ENCODE measurements at regions of chr10 and their contacts with region 1.

Region 1: DNA sequence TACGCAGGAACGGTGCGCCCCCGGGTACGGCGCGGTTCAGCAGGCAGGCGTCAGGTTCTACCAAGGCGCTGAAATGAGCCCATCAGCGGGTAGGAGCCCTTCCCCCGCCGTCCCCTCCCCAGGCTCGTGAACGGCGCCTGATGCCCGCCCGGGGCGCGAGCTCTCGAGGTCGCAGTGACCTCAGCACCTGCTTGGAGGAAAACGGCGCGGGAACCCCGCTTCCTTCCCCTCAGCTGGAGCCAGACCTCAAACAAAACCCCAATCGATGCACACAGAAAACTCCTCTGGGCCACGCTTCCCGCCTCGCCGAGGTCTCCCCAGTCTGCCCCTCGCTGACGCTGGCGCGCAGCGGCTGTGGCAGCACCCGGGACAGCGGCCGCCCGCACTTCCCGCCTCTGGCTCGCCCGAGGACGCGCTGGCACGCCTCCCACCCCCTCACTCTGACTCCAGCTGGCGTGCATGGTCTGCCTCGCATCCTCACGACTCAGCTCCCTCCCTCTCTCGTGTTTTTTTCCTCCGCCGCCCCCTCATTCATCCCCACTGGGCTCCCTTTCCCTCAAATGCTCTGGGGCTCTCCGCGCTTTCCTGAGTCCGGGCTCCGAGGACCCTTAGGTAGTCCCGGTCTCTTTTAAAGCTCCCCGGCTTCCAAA is 514 bp upstream of the GAD2 start:
- DNase-seq: peak; percentile 71
- H3K4me3 Mint-ChIP-seq: peak overlapping the region; percentile 40
- H3K27ac Mint-ChIP-seq: no peak overlapping the region
- H3K4me1 Mint-ChIP-seq: peaks cover 40% of the 10 kb centered on the region
- H3K27me3 Mint-ChIP-seq: peaks cover 85% of the 10 kb centered on the region

Region 2: GRCh38 chr10:25875556-25876165 is 340.4 kb before region 1 on chr10:
- CTCF ChIA-PET with region 1: no interaction called
- intact Hi-C with region 1: loop called (anchors 2 kb)
- DNase-seq: peak; percentile 85
- H3K4me3 Mint-ChIP-seq: no peak overlapping the region
- H3K27ac Mint-ChIP-seq: no peak overlapping the region
- H3K4me1 Mint-ChIP-seq: no peaks in the 10 kb centered on the region
- H3K27me3 Mint-ChIP-seq: peaks cover 4% of the 10 kb centered on the region

Region 3: DNA sequence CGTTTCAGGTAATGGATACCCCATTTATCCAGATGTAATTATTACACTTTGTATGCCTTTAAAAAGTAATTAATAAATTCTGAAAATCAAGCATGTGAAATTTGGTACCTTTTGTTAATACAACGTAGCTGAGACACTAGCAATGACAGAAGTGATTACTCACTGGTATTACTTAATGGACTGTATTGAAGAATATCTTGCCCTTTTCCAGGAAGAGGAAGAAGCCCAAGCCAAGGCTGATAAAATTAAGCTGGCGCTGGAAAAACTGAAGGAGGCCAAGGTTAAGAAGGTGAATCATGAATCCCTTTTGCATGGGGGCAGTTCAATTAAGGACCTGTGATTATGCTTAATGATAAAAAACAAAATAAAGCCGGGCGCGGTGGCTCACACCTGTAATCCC is 286.9 kb after region 1 on chr10:
- CTCF ChIA-PET with region 1: no interaction called
- intact Hi-C with region 1: no loop called
- DNase-seq: no peak
- H3K4me3 Mint-ChIP-seq: no peak overlapping the region
- H3K27ac Mint-ChIP-seq: peak overlapping the region; percentile 9
- H3K4me1 Mint-ChIP-seq: peaks cover 12% of the 10 kb centered on the region
- H3K27me3 Mint-ChIP-seq: no peaks in the 10 kb centered on the region

Region 4: DNA sequence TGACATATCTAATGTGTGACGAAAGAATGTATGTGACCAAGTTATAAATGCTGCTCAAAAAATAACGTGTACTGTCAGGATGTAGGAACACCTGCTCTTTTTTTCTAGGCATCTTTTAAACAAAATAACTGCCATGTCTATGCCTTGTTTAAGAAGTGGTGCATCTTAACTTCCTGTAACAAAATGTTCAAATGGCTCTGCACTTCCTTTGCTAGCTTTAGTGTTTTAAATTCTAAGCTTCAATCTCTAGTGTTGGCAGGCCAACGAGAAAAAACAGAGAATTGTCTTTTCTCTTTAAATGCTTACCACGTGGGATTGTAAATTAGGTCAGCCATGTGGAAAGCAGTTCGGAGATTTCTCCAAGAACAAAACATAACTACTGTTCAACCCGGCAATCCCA is 466.9 kb after region 1 on chr10:
- CTCF ChIA-PET with region 1: no interaction called
- intact Hi-C with region 1: loop called (anchors 10 kb)
- DNase-seq: no peak
- H3K4me3 Mint-ChIP-seq: no peak overlapping the region
- H3K27ac Mint-ChIP-seq: peak overlapping the region; percentile 56
- H3K4me1 Mint-ChIP-seq: peaks cover 23% of the 10 kb centered on the region
- H3K27me3 Mint-ChIP-seq: no peaks in the 10 kb centered on the region

Measured in activated naive CD4-positive, alpha-beta T cell treated with anti-CD3 and anti-CD28 coated beads for 36 hours (primary cell).